Mammary epithelial cell (primary cell): ENCODE measurements at regions of chr1 and their contacts with region 1.

Region 1: GRCh38 chr1:60126723-60127122 is 53.2 kb upstream of the C1orf87 start:
- DNase-seq: no peak
- H3K4me3 ChIP-seq: no peak overlapping the region
- H3K27ac ChIP-seq: no peak overlapping the region
- H3K4me1 ChIP-seq: no peaks in the 10 kb centered on the region
- H3K27me3 ChIP-seq: no peaks in the 10 kb centered on the region
- CTCF ChIP-seq: peak in 1 of 2 donors; percentile 11

Region 2: GRCh38 chr1:59971464-59971911 is 155.2 kb before region 1 on chr1:
- CTCF ChIA-PET with region 1: no interaction called
- dilution Hi-C with region 1: no loop called
- in situ Hi-C with region 1: no loop called
- intact Hi-C with region 1: loop called (anchors 1 kb)
- DNase-seq: peak; percentile 55
- H3K4me3 ChIP-seq: no peak overlapping the region
- H3K27ac ChIP-seq: no peak overlapping the region
- H3K4me1 ChIP-seq: no peaks in the 10 kb centered on the region
- H3K27me3 ChIP-seq: peaks cover 7% of the 10 kb centered on the region
- CTCF ChIP-seq: peak; percentile 83 to 93